Activated CD8-positive, alpha-beta T cell treated with anti-CD3 and anti-CD28 coated beads, Interleukin-2, amount 10 ng/mL, durations not matched to agents 7 days and 5 days (primary cell): ENCODE measurements at regions of chr19 and their contacts with region 1.

Region 1: GRCh38 chr19:17249887-17250548 is 4.3 kb upstream of the NR2F6 start:
- DNase-seq: no peak
- ATAC-seq: no peak
- H3K4me3 Mint-ChIP-seq: no peak overlapping the region
- H3K27ac Mint-ChIP-seq: no peak overlapping the region
- H3K4me1 Mint-ChIP-seq: peaks cover 7% of the 10 kb centered on the region
- H3K27me3 Mint-ChIP-seq: peaks cover 9% of the 10 kb centered on the region

Region 2: DNA sequence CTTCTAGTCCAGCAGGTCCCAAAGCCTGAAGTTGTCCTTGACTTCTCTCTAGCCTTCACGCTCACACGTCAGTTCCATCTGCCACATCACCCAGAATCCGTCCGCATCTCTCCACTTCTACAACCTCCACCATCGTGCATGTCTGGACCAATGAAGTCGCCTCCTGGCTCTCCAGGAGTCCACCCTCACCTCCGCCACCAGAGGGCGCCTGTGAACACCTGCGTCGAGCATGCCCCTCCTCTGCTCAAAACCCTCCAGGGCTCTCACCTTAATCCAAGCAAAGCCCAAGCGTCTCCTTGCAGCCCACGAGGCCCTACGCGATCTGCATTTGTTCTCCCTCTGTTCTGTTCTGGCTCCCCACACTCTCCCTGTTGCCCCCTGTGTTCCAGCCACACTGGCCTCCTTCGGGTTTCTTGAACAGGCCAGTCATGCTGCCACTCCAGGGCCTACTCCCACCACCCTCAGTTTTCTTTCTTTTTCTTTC is 10.9 kb after region 1 on chr19:
- CTCF ChIA-PET with region 1: interaction called, 14 read pairs
- POLR2A ChIA-PET with region 1: interaction called, 3 read pairs
- DNase-seq: peak; percentile 93
- ATAC-seq: peak; percentile 100
- H3K4me3 Mint-ChIP-seq: no peak overlapping the region
- H3K27ac Mint-ChIP-seq: no peak overlapping the region
- H3K4me1 Mint-ChIP-seq: peaks cover 15% of the 10 kb centered on the region
- H3K27me3 Mint-ChIP-seq: peaks cover 2% of the 10 kb centered on the region

Region 3: GRCh38 chr19:17370026-17370587 is 120.1 kb after region 1 on chr19:
- CTCF ChIA-PET with region 1: no interaction called
- POLR2A ChIA-PET with region 1: no interaction called
- DNase-seq: no peak
- ATAC-seq: no peak
- H3K4me3 Mint-ChIP-seq: no peak overlapping the region
- H3K27ac Mint-ChIP-seq: no peak overlapping the region
- H3K4me1 Mint-ChIP-seq: peaks cover 7% of the 10 kb centered on the region
- H3K27me3 Mint-ChIP-seq: peaks cover 6% of the 10 kb centered on the region